ENCODE measurements at regions of chr12 and their contacts with region 1.

Region 1: DNA sequence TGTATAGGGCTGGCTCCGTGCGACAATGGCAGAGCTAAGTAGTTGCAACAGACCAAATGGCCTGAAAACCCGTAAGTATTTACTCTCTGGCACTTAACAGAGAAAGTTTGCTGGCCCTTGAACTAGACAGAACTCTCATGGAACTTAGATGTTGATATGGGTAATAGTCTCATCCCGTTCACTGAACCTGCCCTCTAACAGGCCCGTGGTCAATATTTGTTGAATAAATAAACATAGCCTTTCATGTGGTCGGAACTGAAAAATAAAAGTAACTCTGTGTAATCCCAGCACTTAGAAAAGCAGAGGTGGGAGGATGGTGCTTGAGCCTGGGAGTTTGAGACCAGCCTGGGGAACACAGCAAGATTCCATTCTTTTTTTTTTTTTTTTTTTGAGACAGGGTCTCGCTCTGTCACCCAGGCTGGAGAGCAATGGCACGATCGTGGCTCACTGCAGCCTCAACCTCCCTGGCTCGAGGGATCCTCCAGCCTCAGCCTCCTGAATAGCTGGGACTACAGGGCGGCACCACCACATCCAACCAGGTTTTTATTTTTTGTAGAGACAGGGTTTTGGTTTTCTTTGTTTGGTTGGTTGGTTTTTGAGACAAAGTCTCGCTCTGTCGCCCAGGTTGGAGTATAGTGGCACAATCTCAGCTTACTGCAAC is 29.7 kb downstream of the KDM2B start:
- DNase-seq: no peak
- H3K4me3 ChIP-seq: no peak overlapping the region
- H3K27ac ChIP-seq: no peak overlapping the region
- H3K4me1 ChIP-seq: peaks cover 0 to 6% (median 3%) of the 10 kb centered on the region in 4 donors
- H3K27me3 ChIP-seq: no peaks in the 10 kb centered on the region
- CTCF ChIP-seq: no peak
- EP300 ChIP-seq: no peak
- POLR2A ChIP-seq: no peak

Region 2: DNA sequence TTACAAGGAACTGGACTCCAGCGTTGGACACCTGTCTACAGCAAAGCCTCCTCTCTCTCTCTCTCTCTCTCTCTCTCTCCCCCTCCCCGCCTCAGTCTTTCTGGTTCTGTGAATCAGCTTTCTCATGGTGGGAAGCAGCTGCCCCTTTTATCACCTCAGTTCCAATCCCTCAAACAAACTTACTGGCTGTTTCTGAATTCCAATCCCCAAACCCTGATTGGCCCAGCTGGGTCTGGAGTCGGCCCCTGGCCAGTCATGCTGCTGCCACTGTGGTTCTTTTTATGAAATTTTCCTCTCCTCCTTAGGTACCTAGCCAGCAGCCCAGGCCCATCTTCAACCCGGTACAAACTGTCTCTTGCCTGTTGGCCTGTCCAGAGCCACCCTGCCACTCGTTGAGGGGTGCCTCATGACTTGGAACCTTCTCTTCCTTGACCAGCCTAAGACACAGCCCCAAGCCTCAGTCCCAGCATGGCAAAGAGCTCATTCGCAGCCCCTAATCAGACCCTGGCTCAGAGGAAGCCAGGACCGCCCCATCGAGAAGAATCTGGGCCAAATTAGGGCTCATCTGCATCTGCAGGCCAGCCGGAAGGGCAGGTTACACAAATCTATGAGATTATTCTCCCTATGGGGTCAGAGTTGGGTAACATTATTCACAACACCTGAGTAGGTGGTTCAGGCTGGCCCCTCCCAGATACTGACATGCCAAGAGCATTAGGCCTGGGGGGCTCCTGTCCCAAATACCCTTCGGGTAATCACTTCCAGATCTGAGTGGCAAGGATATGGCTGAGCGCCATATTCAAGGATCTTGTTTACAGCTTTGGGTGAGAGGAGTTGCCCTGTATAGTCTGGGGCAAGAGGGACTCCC is 127.8 kb after region 1 on chr12:
- intact Hi-C with region 1: loop called (anchors 2 kb)
- DNase-seq: no peak
- H3K4me3 ChIP-seq: no peak overlapping the region
- H3K27ac ChIP-seq: no peak overlapping the region
- H3K4me1 ChIP-seq: no peaks in the 10 kb centered on the region
- H3K27me3 ChIP-seq: no peaks in the 10 kb centered on the region
- CTCF ChIP-seq: no peak
- EP300 ChIP-seq: no peak
- POLR2A ChIP-seq: no peak